K562 (cell line): ENCODE measurements at regions of chr11 and their contacts with region 1.

Region 1: GRCh38 chr11:43708776-43709175 is 28.2 kb downstream of the HSD17B12 start:
- DNase-seq: no peak
- ATAC-seq: peak; percentile 77
- H3K4me3 ChIP-seq: no peak overlapping the region
- H3K27ac ChIP-seq: no peak overlapping the region
- H3K4me1 ChIP-seq: no peaks in the 10 kb centered on the region
- H3K27me3 ChIP-seq: no peaks in the 10 kb centered on the region
- CTCF ChIP-seq: peak; percentile 26 to 61 (median 55); a peak in 3 of 6 replicates
- EP300 ChIP-seq: no peak
- POLR2A ChIP-seq: no peak
- RAD21 ChIP-seq: peak; percentile 72 to 75

Region 2: DNA sequence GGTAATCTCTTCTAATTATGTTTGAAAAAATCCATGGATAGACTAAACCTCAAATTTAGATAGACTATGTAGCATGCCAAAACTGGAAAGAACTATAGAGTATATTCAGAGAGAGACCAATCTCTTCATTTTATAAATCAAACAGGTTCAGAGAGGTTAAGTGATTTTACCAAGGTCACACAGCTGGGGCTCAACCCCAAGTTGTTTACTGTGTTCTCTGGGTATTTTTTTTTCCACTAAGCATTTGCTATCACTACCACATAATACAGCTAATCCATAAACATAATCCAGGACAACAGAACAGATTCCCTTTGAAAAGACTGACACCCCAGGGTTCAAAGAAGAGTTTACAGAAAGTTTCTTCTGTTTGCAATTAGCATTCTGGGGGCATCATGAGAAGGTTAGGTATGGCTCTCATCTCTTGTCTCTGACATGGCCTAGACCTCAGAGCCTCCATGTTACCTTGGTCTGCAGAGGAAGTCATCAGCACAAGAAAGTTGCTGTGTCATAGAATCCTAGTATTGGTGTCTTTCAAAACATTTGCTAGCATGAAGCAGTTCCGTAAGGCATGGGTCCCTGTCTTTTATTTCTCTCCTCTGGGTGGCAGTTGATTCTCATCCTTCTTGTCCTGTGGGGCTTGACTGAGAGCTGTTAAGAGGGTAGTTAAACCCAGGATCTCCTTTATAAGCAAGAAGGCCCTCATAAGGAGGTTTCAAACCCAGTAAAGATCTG is 122.7 kb before region 1 on chr11:
- CTCF ChIA-PET with region 1: interaction called, 6 read pairs
- POLR2A ChIA-PET with region 1: no interaction called
- in situ Hi-C with region 1: no loop called
- intact Hi-C with region 1: loop called (anchors 5 kb)
- DNase-seq: peak in 1 of 4 experiments; percentile 29
- ATAC-seq: peak; percentile 58
- H3K4me3 ChIP-seq: no peak overlapping the region
- H3K27ac ChIP-seq: no peak overlapping the region
- H3K4me1 ChIP-seq: peaks cover 0 to 5% of the 10 kb centered on the region in 2 experiments; a peak in 2 of 5 replicates
- H3K27me3 ChIP-seq: peaks cover 9 to 39% of the 10 kb centered on the region in 2 experiments; a peak in 4 of 5 replicates
- CTCF ChIP-seq: peak in 2 of 3 experiments; percentile 12 to 39; a peak in 3 of 6 replicates
- EP300 ChIP-seq: no peak
- POLR2A ChIP-seq: no peak
- RAD21 ChIP-seq: peak; percentile 43 to 57

Region 3: GRCh38 chr11:43626798-43627197 is 82.0 kb before region 1 on chr11:
- CTCF ChIA-PET with region 1: no interaction called
- POLR2A ChIA-PET with region 1: no interaction called
- in situ Hi-C with region 1: no loop called
- intact Hi-C with region 1: no loop called
- DNase-seq: no peak
- ATAC-seq: no peak
- H3K4me3 ChIP-seq: no peak overlapping the region
- H3K27ac ChIP-seq: no peak overlapping the region
- H3K4me1 ChIP-seq: no peaks in the 10 kb centered on the region
- H3K27me3 ChIP-seq: no peaks in the 10 kb centered on the region; a peak in 1 of 5 replicates
- CTCF ChIP-seq: no peak
- EP300 ChIP-seq: no peak
- POLR2A ChIP-seq: no peak
- RAD21 ChIP-seq: no peak

Region 4: DNA sequence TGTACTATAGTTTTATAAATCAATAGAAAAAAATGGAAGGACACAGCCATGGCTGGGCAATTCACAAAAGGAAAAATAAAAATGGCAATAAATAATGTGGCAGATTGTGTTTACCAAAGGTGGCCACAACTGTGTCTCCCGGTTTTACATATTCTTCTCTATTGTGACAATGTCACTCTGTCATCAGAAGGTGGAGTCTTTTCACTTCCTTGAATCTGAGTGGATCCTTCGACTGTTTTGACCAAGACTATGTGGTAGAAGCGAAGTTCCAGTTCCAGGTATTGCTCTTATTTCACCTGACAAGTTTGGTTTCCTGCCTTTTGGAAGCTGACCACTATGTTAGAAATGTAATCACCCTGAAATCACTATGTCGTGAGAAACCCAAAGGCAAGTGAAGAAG is 59.3 kb before region 1 on chr11:
- CTCF ChIA-PET with region 1: no interaction called
- POLR2A ChIA-PET with region 1: no interaction called
- in situ Hi-C with region 1: no loop called
- intact Hi-C with region 1: loop called (anchors 2 kb)
- DNase-seq: no peak
- ATAC-seq: peak; percentile 50; the same call in 1 of the 3 replicates
- H3K4me3 ChIP-seq: no peak overlapping the region
- H3K27ac ChIP-seq: no peak overlapping the region
- H3K4me1 ChIP-seq: peaks cover 0 to 4% of the 10 kb centered on the region in 2 experiments; a peak in 1 of 5 replicates
- H3K27me3 ChIP-seq: no peaks in the 10 kb centered on the region
- CTCF ChIP-seq: 0 out of 6 replicates have a peak, but pooled peaks of 1 of the 3 experiments have one; percentile 19
- EP300 ChIP-seq: no peak
- POLR2A ChIP-seq: no peak
- RAD21 ChIP-seq: peak in 1 of 2 experiments; percentile 52; a peak in 2 of 4 replicates